Right cardiac atrium (tissue), 5 donors: ENCODE measurements at regions of chr10 and their contacts with region 1.

Region 1: DNA sequence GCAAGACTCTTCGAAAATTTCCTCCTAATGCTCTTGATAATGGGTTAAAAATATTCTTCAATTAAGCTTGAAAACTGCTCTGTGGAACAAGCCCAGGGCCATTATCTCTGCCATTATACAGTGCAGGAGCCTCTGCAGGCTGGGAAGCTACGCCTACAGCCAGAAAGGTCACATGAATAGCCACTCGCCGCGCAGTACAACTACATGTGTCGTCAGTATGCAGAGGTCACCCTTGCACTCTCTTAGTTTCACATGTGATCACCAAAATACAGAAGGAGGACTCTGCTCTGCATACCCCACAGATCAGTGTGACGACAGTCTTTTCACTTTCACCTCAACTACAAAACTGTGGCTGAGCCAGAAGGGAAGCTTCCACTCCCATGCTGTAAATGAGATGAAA is 141.8 kb upstream of the C1QL3 start:
- DNase-seq: peak in 2 of 3 donors; percentile 58 to 59
- ATAC-seq: peak; percentile 93
- H3K4me3 ChIP-seq: no peak overlapping the region
- H3K27ac ChIP-seq: peak overlapping the region; percentile 58
- H3K4me1 ChIP-seq: peaks cover 2% of the 10 kb centered on the region
- H3K27me3 ChIP-seq: no peaks in the 10 kb centered on the region

Region 2: DNA sequence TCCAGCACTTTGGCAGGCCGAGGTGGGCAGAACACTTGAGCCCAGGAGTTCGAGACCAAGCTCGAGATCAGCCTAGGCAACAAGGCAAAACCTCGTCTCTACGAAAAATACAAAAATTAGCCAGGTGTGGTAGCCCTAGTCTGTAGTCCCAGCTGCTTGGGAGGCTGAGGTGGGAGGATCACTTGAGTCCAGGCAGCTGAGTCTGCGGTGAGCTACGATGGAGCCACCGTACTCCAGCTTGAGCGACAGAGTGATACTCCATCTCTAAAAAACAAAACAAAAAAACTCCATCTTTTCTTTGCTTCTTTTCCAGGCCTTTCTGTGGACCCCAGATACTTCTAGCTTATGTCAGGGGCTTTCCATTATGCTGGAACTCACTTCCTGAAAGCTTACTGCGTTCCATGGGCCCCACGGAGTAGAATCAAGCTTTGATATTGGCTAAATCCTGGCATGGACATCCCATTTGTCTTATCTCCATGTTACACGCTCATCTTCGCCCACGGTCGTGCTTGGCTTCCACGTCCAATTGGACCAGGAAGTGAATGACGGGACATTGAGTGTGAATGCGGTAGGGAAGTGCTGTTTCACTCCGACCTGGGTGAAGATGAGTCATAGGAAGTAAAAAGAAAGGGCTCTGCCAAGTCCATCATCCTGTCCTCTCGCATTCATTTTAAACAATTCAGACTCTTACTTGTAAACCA is 1338.1 kb before region 1 on chr10:
- intact Hi-C with region 1: no loop called
- DNase-seq: peak in 1 of 3 donors; percentile 42
- ATAC-seq: peak in 1 of 2 donors; percentile 80
- H3K4me3 ChIP-seq: no peak overlapping the region
- H3K27ac ChIP-seq: no peak overlapping the region
- H3K4me1 ChIP-seq: peaks cover 2% of the 10 kb centered on the region
- H3K27me3 ChIP-seq: no peaks in the 10 kb centered on the region

Region 3: GRCh38 chr10:16601881-16602775 is 61.3 kb before region 1 on chr10:
- intact Hi-C with region 1: loop called in 1 of 4 experiments (anchors 2 kb)
- DNase-seq: no peak
- ATAC-seq: no peak
- H3K4me3 ChIP-seq: no peak overlapping the region
- H3K27ac ChIP-seq: no peak overlapping the region
- H3K4me1 ChIP-seq: no peaks in the 10 kb centered on the region
- H3K27me3 ChIP-seq: no peaks in the 10 kb centered on the region

Region 4: DNA sequence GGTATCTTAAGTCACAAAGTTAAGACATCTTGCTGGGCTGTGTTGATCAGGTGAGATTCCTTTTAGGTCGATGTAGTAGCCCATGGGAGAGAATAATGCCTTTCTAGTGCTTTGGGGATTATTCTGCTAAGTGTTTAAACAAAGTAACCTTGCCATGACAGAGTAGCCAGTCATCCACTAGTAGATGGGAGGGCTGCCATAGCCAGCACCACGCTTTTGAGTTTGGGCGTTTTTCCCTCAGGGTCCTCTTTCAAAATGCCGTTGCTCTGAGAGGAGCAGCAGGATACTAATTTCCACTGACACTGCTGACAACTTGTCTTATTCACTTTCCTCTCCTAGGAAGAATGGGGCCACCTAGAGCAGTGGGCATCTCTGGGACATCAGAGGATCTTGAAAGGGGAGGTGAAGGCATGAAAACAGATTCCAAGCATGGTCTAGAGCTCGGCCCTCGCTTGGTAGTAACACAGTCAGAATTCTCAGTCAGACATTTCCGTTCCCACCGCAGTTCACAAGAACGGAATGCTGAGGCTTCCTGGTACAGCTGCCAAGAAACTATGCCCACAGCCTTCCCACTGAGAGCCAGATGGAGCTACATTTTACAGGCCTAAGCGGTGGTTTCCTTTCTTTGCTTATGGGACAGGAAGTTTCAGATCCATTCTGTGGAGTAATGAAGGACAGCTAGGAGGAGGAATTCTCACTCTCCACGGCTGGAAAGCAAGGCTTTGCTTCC is 169.1 kb after region 1 on chr10:
- intact Hi-C with region 1: no loop called
- DNase-seq: peak in 2 of 3 donors; percentile 24 to 43
- ATAC-seq: peak; percentile 68
- H3K4me3 ChIP-seq: no peak overlapping the region
- H3K27ac ChIP-seq: peak overlapping the region; percentile 84
- H3K4me1 ChIP-seq: peaks cover 6% of the 10 kb centered on the region
- H3K27me3 ChIP-seq: no peaks in the 10 kb centered on the region